Activated T-helper 1 cell treated with anti-CD3 and anti-CD28 coated beads, Interleukin-12 subunit alpha, Interleukin-12 subunit beta, Interleukin-2, Interleukin-4 antibody, amounts not matched to agents 30 ng/mL and 10 ng/mL and 1 ng/mL, durations not matched to agents 14 hours and 24 hours and 36 hours (primary cell): ENCODE measurements at regions of chr3 and their contacts with region 1.

Region 1: DNA sequence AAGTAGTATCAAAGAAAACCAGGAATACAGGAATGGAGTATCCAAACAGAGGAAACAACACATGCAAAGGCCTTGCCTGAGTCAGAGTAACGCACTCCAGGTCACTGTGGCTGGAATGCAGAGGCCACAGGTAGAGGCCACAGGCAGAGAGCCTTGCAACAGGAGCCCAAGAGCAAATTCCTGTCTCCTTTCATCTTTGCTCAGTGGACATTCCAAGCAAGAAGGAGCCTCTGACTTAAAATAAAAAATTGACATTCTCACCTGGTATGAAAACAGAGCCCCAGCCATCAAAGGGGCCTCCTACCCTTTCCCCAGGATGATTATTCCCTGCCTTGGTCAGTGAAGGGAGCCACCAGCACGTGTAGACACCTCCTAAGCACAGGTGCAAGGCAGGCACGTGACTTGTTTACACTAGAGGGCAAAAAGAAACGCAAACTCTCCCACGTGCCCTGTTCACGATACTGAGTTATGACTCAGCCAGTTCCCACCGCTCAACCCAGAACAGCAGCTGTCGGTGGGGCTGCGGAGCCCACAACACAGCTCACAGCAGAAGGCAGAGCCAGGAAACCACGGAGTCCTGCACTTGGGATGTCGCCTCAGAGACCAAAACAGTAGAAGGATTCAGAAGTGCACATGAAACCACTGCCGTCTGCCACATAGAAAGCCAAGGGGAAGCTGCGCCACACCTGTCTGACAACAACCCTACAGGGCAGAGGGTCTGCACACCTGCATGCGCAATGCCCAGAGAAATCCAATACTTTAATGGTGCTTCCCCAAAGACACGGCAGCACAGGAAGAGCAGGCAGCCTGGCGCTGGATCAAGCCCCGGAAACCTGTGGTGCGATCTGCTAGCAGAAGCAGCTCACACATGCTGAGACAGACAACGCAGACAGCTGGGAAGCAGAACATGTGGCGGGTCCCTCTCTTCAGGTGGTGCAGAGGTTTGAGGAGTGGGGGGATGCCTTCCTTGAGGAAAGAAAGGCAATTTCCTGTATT is 52.1 kb downstream of the ITGB5 start:
- DNase-seq: peak; percentile 30
- H3K4me3 Mint-ChIP-seq: peak overlapping the region; percentile 55
- H3K27ac Mint-ChIP-seq: no peak overlapping the region
- H3K4me1 Mint-ChIP-seq: peaks cover 12% of the 10 kb centered on the region
- H3K27me3 Mint-ChIP-seq: peaks cover 38% of the 10 kb centered on the region

Region 2: DNA sequence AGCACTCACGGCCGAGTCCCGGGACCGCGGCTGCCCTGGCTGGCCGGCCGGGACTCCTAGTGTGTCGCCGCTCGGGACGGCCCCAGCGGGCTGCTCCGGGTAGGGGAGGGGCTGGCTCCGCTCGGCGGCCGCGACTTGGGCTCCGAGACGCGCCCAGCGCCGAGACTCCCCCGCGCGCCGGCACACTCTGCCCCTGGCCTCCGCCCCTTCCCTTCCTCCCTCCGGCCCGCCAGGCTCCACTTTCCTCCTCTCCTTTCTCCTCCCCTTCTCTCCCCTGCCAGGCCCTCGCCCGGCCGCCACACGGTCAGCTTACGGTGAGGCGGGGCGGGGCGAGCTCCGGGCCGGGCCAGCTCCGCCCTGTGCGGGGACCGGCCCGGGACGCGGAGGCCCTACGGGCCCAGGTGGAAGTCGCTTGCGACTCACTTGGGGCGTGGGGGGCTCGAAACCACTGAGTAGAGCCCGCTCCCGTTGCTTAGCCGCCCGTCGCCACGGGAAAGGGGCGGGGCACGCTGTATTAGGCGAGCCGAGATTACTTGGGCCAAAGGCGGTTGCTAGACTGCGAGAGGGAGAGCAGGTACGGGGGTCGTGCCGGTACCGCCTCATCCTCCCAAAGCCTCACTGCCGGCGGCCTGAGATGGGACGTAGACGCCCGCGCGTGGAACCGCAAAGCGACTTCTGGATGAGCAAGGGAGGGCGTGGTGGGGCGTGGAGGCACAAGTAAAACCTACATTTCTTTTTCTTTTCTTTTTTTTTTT is 52.3 kb after region 1 on chr3 and contains the start of gene ITGB5:
- intact Hi-C with region 1: loop called (anchors 2 kb)
- DNase-seq: peak; percentile 3
- H3K4me3 Mint-ChIP-seq: peak within 1 kb of the TSS; percentile 63
- H3K27ac Mint-ChIP-seq: no peak within 1 kb of the TSS
- H3K4me1 Mint-ChIP-seq: no peaks in the 10 kb centered on the region
- H3K27me3 Mint-ChIP-seq: peaks cover 65% of the 10 kb centered on the region
- total RNA-seq, gene ITGB5: 2.2 and 3.1 TPM in 2 replicates

Region 3: DNA sequence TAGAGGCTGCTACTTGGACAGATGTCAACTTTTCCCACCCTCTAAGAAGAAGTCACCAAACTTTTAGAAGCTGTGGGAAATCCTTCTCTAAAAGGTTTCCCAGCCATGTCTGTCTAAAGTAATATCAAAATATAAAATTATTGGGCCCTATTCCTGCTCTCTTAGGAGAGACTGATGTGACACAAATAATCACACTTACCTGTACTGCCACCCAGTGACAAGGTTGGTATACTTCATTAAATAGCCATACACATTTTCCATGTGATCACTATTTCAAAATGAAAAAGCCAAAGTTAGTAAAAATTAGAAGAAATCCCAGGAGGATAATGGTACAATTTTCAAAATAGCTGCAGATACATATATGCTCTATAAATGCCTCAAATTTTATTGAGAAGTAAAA is 747.7 kb after region 1 on chr3:
- intact Hi-C with region 1: no loop called
- DNase-seq: no peak
- H3K4me3 Mint-ChIP-seq: no peak overlapping the region
- H3K27ac Mint-ChIP-seq: no peak overlapping the region
- H3K4me1 Mint-ChIP-seq: peaks cover 9% of the 10 kb centered on the region
- H3K27me3 Mint-ChIP-seq: no peaks in the 10 kb centered on the region